ENCODE measurements at regions of chrX and their contacts with region 1.

Region 1: DNA sequence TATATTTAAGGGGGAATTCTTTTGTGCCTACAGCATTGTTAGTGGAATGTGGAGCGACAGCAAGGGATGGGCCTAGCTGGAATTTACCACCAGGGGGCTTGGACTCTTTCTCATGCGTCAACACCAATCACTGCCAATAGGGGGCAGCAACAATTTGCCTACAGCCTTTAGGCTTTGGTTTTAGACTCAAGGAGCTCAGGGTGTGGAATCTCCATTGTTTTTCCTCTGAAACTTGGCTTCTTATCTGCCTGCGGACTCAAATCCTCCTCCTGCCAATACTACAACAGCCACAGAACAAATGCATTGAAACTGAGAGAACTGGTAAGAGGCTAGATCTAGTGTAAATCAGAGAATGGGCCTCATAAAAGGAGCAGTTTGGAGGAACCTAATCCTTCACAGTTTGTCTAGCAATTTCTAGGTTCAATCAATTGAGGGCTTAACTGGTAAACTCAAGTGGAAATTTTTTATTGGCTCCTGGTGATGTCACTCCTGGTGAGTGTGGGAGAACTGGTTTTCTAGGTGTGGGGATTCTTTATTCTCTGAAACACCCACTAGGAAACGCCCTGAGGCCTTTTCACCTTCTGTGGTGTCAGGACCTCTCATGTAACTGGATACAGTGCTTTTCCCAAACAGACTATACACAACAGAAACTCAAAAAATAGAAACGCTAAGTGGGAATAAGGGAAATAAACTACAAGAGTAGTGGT is 27.9 kb upstream of the TMSB4X start:
- DNase-seq: peak; percentile 95
- H3K4me3 ChIP-seq: no peak overlapping the region
- H3K27ac ChIP-seq: peak overlapping the region; percentile 86
- H3K4me1 ChIP-seq: peaks cover 16% of the 10 kb centered on the region
- H3K27me3 ChIP-seq: no peaks in the 10 kb centered on the region
- CTCF ChIP-seq: peak; percentile 100

Region 2: DNA sequence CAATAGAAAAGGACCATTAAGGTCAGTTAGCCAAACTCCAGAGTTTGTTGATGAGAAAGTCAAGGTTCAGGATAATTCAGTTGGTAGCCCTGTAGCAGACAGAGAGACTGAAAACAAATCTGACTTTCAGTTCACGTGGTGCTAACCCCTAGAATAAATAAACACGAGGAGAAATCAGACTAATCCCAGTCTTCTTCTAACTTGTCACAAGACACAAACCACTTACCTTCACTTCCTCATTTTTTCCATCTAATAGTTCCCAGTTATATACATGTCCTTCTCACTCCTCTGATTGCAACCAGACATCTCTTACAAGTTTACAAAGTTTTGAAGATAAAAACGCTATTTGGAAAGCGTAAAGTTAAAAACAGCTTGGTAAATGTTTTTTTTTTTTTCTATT is 72.4 kb before region 1 on chrX:
- CTCF ChIA-PET with region 1: no interaction called
- dilution Hi-C with region 1: no loop called
- in situ Hi-C with region 1: no loop called
- intact Hi-C with region 1: no loop called
- DNase-seq: no peak
- H3K4me3 ChIP-seq: no peak overlapping the region
- H3K27ac ChIP-seq: no peak overlapping the region
- H3K4me1 ChIP-seq: no peaks in the 10 kb centered on the region
- H3K27me3 ChIP-seq: no peaks in the 10 kb centered on the region
- CTCF ChIP-seq: no peak

Region 3: GRCh38 chrX:12885508-12885907 is 61.5 kb before region 1 on chrX:
- CTCF ChIA-PET with region 1: no interaction called
- dilution Hi-C with region 1: no loop called
- in situ Hi-C with region 1: no loop called
- intact Hi-C with region 1: no loop called
- DNase-seq: no peak
- H3K4me3 ChIP-seq: no peak overlapping the region
- H3K27ac ChIP-seq: no peak overlapping the region
- H3K4me1 ChIP-seq: no peaks in the 10 kb centered on the region
- H3K27me3 ChIP-seq: peaks cover 7% of the 10 kb centered on the region
- CTCF ChIP-seq: no peak

Region 4: GRCh38 chrX:12999422-12999821 is 52.4 kb after region 1 on chrX:
- CTCF ChIA-PET with region 1: no interaction called
- dilution Hi-C with region 1: loop called (anchors 5 kb)
- in situ Hi-C with region 1: no loop called
- intact Hi-C with region 1: no loop called
- DNase-seq: no peak
- H3K4me3 ChIP-seq: no peak overlapping the region
- H3K27ac ChIP-seq: no peak overlapping the region
- H3K4me1 ChIP-seq: peaks cover 21% of the 10 kb centered on the region
- H3K27me3 ChIP-seq: no peaks in the 10 kb centered on the region
- CTCF ChIP-seq: no peak

Region 5: GRCh38 chrX:13101441-13102139 is 154.6 kb after region 1 on chrX:
- CTCF ChIA-PET with region 1: interaction called, 3 read pairs
- dilution Hi-C with region 1: no loop called
- in situ Hi-C with region 1: no loop called
- intact Hi-C with region 1: loop called (anchors 5 kb)
- DNase-seq: peak; percentile 97
- H3K4me3 ChIP-seq: no peak overlapping the region
- H3K27ac ChIP-seq: peak overlapping the region; percentile 68
- H3K4me1 ChIP-seq: peaks cover 26% of the 10 kb centered on the region
- H3K27me3 ChIP-seq: no peaks in the 10 kb centered on the region
- CTCF ChIP-seq: no peak

Region 6: DNA sequence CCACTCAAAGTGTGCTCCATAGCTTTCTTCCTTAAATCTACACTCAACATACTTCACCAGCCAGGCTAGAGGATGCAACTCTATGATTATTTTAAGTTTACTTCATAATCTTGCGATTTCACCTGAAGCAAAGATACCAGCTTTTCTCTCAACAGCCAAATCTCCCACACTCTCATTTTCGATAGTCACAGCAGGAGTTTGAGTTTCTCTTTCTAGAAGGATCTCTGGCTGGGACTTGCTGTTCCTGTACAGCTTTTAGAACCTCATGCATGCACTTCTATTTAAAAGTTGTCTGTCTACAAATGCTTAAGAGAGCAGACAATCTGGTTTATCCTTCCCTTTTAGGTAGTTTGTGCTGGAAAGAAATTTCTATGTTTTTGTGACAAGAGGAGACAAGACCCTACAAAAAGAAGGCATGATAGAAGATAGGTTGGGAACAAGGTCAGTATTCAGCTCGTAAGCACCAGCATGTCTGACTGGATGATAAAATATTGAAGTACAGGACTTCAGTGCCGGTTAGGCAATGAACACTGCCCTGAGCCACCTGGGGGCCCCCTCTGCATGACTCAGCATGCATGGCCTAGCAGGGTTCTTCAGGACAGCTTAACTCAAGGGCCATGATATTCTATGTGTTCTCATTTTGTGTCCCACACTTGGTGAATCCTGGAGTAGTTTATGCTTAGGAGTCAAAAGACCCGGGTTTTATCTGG is 307.2 kb after region 1 on chrX:
- CTCF ChIA-PET with region 1: interaction called, 3 read pairs
- dilution Hi-C with region 1: no loop called
- in situ Hi-C with region 1: no loop called
- intact Hi-C with region 1: loop called (anchors 1 kb)
- DNase-seq: peak; percentile 74
- H3K4me3 ChIP-seq: no peak overlapping the region
- H3K27ac ChIP-seq: no peak overlapping the region
- H3K4me1 ChIP-seq: peaks cover 9% of the 10 kb centered on the region
- H3K27me3 ChIP-seq: no peaks in the 10 kb centered on the region
- CTCF ChIP-seq: peak in 1 of 2 donors; percentile 43

Region 7: DNA sequence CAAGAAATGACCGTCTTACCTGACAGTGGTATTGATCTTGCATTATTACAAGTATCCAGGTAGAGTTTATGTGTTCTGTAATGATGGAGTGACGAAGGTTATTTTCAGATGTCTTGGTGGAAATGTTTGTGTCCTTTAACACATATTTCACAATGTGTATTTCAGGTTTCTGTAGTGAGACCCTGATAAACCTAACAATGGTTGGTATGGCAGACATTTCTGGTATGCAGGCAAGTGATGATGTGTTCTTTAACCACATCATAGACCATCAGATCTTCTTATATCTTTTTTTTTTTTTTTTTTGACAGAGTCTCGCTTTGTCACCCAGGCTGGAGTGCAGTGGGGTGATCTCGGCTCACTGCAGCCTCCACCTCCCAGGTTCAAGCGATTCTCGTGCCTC is 387.5 kb after region 1 on chrX:
- CTCF ChIA-PET with region 1: interaction called, 11 read pairs
- dilution Hi-C with region 1: no loop called
- in situ Hi-C with region 1: no loop called
- intact Hi-C with region 1: no loop called
- DNase-seq: no peak
- H3K4me3 ChIP-seq: no peak overlapping the region
- H3K27ac ChIP-seq: no peak overlapping the region
- H3K4me1 ChIP-seq: peaks cover 10% of the 10 kb centered on the region
- H3K27me3 ChIP-seq: no peaks in the 10 kb centered on the region
- CTCF ChIP-seq: no peak

Region 8: DNA sequence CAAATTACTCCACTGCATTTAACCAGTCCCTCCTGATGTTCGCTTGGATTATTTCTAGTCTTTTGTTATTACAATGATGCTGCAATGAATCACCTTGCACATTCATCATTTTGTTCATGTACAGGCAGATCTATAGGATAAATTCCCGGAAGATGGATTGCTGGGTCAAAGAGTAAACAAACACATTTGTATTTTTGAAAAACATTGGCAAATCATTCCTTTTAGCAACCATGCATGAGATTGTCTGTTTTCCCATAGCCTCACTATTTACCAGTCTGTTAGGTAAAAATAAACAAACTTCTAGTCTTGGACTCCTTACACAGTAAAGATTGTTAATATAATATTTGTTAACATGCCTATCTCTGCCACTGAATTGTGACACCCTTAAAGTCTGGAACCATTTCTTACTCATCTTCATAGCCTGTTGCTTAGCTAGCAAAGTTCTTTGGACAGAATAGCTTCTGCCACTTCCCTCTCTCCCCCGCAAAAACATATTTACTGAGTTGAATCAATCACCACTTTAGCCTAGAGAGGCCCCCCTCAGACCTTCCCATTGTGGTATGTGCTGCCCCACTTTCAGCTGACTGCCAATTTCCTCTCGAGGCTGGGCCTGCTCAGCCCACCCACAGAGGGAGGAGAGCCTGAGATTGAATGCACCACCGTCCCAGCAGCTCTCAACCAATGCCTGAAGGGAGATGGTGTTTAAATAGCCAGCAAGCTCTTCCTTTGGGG is 481.2 kb after region 1 on chrX:
- CTCF ChIA-PET with region 1: no interaction called
- dilution Hi-C with region 1: no loop called
- in situ Hi-C with region 1: no loop called
- intact Hi-C with region 1: loop called (anchors 5 kb)
- DNase-seq: peak; percentile 92
- H3K4me3 ChIP-seq: no peak overlapping the region
- H3K27ac ChIP-seq: peak overlapping the region; percentile 77
- H3K4me1 ChIP-seq: peaks cover 47% of the 10 kb centered on the region
- H3K27me3 ChIP-seq: no peaks in the 10 kb centered on the region
- CTCF ChIP-seq: no peak

Region 9: GRCh38 chrX:13816643-13817627 is 869.9 kb after region 1 on chrX and contains the start of gene GPM6B:
- CTCF ChIA-PET with region 1: no interaction called
- dilution Hi-C with region 1: no loop called
- in situ Hi-C with region 1: no loop called
- intact Hi-C with region 1: no loop called
- DNase-seq: no peak
- H3K4me3 ChIP-seq: peak within 1 kb of the TSS; percentile 48 to 75 (median 64)
- H3K27ac ChIP-seq: peak within 1 kb of the TSS; percentile 67
- H3K4me1 ChIP-seq: no peaks in the 10 kb centered on the region
- H3K27me3 ChIP-seq: no peaks in the 10 kb centered on the region
- CTCF ChIP-seq: no peak
- total RNA-seq, gene GPM6B: 4.0 to 146 TPM

Measured in mammary epithelial cell (primary cell).